ENCODE measurements at regions of chr17 and their contacts with region 1.

Region 1: DNA sequence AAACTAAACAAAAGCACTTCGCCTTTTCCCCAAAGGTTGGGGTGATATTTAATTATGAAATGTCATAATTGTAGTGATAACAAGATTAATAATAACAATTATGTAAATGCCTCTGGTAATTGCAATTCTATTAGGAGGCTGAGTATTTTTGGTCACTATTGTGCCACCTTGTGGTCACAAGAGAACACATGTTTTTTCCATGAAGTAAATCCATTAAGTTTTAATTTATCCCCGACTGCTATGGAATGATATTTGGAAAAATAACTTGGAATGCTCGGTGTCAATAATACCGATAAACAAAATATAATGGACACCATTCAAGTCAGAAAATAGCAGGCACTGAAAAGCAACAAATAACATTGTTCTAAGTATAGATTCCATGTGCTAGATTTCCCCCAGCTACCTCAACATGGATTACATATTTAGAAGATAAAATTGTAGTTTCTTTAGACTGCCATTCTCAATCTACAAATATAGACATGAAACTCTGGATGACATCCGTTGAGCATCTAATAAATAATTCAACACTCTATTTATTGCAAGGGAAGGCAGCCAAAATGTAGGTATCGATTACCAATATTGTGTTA is 25.0 kb upstream of the KCNJ2 start:
- DNase-seq: no peak
- H3K4me3 Mint-ChIP-seq: no peak overlapping the region
- H3K27ac Mint-ChIP-seq: no peak overlapping the region
- H3K4me1 Mint-ChIP-seq: no peaks in the 10 kb centered on the region
- H3K27me3 Mint-ChIP-seq: peaks cover 20% of the 10 kb centered on the region

Region 2: GRCh38 chr17:69607162-69607834 is 537.1 kb before region 1 on chr17:
- intact Hi-C with region 1: loop called (anchors 2 kb)
- DNase-seq: peak; percentile 24
- H3K4me3 Mint-ChIP-seq: no peak overlapping the region
- H3K27ac Mint-ChIP-seq: peak overlapping the region; percentile 64
- H3K4me1 Mint-ChIP-seq: peaks cover 41% of the 10 kb centered on the region
- H3K27me3 Mint-ChIP-seq: peaks cover 4% of the 10 kb centered on the region

Region 3: GRCh38 chr17:70110443-70110880 is 33.9 kb before region 1 on chr17:
- intact Hi-C with region 1: no loop called
- DNase-seq: no peak
- H3K4me3 Mint-ChIP-seq: no peak overlapping the region
- H3K27ac Mint-ChIP-seq: no peak overlapping the region
- H3K4me1 Mint-ChIP-seq: no peaks in the 10 kb centered on the region
- H3K27me3 Mint-ChIP-seq: no peaks in the 10 kb centered on the region